H1 (cell line): ENCODE measurements at regions of chr11 and their contacts with region 1.

Region 1: GRCh38 chr11:67265633-67266423 is 445 bp upstream of the GRK2 start:
- DNase-seq: peak in 1 of 2 experiments; percentile 92
- H3K4me3 ChIP-seq: peak overlapping the region; percentile 16 to 59 (median 31); a peak in 6 of 8 replicates
- H3K27ac ChIP-seq: no peak overlapping the region
- H3K4me1 ChIP-seq: peaks cover 8 to 36% (median 34%) of the 10 kb centered on the region in 4 experiments
- H3K27me3 ChIP-seq: peaks cover 0 to 3% (median 0%) of the 10 kb centered on the region in 4 experiments; a peak in 4 of 7 replicates
- CTCF ChIP-seq: peak in 2 of 3 experiments; percentile 80 to 92; a peak in 3 of 4 replicates
- EP300 ChIP-seq: no peak
- POLR2A ChIP-seq: no peak
- RAD21 ChIP-seq: peak; percentile 61 to 77

Region 2: DNA sequence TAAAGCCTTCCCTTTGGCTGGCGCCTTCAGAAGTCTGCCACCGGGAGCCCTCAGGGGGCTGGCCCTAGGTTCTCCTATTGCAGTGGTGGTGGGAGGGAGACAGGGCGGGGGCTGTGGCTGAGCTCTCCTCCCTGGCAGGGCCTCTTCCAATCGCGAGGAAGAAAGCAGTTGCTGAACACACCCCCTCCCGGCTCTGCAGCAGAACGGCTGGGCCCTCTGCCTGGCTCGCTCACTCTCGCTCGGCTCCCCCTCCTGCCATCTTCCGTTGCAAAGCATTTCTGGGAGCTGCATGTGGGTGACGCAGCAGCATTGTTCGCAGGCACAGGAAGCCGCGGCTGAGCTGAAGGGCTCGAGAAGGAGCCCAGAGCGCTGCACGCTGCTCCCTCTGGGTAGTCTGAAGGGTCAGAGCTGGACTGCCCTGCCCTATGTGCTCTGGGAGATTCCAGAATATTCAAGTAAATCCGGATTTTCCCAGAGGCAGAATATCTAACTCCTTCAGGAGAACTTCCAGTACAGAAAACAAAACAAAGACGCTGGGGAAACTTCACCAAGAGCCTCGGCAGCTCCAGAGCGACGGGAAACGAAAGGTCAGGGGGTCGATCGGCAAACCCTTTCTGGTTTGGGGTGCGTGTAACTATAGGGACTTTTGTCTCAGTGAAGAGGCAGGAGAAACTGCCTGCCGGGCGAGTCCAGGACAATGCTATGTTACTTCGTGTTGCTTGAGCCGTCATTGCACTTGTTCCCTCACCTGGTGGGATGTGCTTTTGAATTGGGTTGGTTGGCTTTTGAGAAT is 25.8 kb before region 1 on chr11:
- CTCF ChIA-PET with region 1: interaction called, 11 read pairs
- POLR2A ChIA-PET with region 1: interaction called, 6 read pairs
- DNase-seq: peak; percentile 91 to 98
- H3K4me3 ChIP-seq: peak overlapping the region; percentile 90 to 99 (median 94)
- H3K27ac ChIP-seq: peak overlapping the region; percentile 83
- H3K4me1 ChIP-seq: peaks cover 6 to 8% (median 7%) of the 10 kb centered on the region in 4 experiments; a peak in 5 of 7 replicates
- H3K27me3 ChIP-seq: no peaks in the 10 kb centered on the region
- CTCF ChIP-seq: no peak
- EP300 ChIP-seq: peak in 1 of 2 experiments; percentile 23; a peak in 1 of 3 replicates
- POLR2A ChIP-seq: peak; percentile 95 to 99
- RAD21 ChIP-seq: peak in 1 of 2 experiments; percentile 12; a peak in 1 of 4 replicates

Region 3: GRCh38 chr11:67277231-67277961 is 11.6 kb after region 1 on chr11:
- CTCF ChIA-PET with region 1: interaction called, 28 read pairs
- POLR2A ChIA-PET with region 1: interaction called, 5 read pairs
- DNase-seq: peak in 1 of 2 experiments; percentile 82
- H3K4me3 ChIP-seq: peak overlapping the region in 1 of 4 experiments; percentile 20; a peak in 1 of 8 replicates
- H3K27ac ChIP-seq: 0 out of 2 replicates have a peak overlapping the region, but pooled peaks have one; percentile 59
- H3K4me1 ChIP-seq: peaks cover 0 to 24% (median 15%) of the 10 kb centered on the region in 4 experiments; a peak in 6 of 7 replicates
- H3K27me3 ChIP-seq: no peaks in the 10 kb centered on the region
- CTCF ChIP-seq: 0 out of 4 replicates have a peak, but pooled peaks of 1 of the 3 experiments have one; percentile 3
- EP300 ChIP-seq: no peak
- POLR2A ChIP-seq: no peak
- RAD21 ChIP-seq: no peak

Region 4: DNA sequence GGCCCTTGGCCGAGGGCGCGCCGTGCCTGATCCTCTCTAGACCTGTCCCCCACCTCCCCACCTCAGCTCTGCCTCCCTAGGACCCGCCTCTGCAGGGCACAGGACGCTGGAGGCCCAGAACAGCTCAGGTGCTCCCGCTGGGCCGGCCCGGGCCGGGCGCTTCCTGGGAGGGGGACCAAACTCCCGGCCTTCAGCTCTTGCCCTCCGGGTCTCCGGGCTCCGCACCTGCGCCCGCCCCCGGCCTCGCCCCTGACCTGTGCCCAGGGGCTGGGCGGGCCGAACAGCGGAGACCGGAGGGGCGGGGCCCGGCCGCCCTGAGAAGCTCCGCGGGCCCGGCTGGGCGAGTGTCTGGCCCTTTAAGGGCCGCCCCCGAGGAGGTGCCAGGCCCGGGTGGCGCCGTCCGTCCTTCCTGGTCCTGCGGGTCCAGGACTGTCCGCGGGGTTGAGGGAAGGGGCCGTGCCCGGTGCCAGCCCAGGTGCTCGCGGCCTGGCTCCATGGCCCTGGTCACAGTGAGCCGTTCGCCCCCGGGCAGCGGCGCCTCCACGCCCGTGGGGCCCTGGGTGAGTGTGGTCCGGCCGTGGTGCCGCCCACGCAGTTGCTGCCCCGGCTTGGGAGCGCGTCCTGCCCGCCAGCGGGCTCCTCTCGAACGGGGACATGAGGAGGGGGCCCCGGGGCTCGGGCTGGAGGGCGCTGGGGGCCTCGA is 37.5 kb after region 1 on chr11 and contains the start of gene SSH3:
- CTCF ChIA-PET with region 1: interaction called, 33 read pairs
- POLR2A ChIA-PET with region 1: interaction called, 19 read pairs
- DNase-seq: peak in 1 of 2 experiments; percentile 46
- H3K4me3 ChIP-seq: peak within 1 kb of the TSS; percentile 67 to 94 (median 74)
- H3K27ac ChIP-seq: no peak within 1 kb of the TSS
- H3K4me1 ChIP-seq: peaks cover 0 to 20% (median 16%) of the 10 kb centered on the region in 4 experiments; a peak in 5 of 7 replicates
- H3K27me3 ChIP-seq: peaks cover 0 to 11% (median 7%) of the 10 kb centered on the region in 4 experiments; a peak in 5 of 7 replicates
- CTCF ChIP-seq: no peak
- EP300 ChIP-seq: no peak
- POLR2A ChIP-seq: no peak; a peak in 1 of 3 replicates
- RAD21 ChIP-seq: no peak
- total RNA-seq, gene SSH3: 19.8 and 23.6 TPM in 2 replicates

Region 5: DNA sequence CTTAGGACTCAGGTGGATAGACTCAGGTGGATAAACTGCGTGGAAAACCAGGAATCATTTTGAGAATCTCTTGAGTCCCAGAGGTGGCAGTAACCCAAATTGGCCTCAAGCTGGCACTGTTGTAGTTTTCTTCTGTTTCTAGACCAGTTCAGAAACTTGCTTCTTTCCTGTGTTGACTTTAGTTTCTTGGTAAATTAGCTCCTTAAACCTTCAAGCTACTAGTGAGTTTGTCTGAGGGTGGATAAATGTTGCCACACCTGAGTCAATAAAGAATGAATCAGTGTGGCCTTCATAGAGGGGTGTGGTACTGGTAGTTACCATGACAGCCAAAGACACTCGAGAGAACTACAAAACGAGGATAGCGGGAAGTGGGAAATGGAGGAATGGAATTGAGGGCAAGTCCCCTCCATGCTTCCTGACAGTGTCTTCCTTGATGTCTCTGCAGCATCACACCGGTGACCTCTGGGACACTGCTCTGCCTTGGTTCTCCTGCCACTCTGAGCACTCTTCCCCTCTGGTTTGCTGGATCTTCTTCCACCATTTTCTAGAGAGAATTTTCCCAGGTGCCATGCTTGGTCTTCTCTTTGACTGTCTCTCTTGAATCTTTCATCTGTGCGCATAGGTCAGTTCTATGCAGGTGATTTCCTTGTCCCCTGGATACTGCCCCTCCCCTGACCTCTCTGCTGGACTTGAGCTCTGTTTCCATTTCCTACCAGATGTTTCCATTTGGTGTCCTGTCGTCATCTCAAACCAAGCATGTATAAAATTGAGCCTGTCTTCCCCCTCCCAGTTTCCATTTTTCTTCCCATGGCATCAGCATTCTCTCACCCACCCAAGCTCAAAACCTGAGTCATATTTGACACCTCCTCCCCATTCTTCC is 80.3 kb after region 1 on chr11:
- CTCF ChIA-PET with region 1: interaction called, 13 read pairs
- POLR2A ChIA-PET with region 1: interaction called, 3 read pairs
- DNase-seq: no peak
- H3K4me3 ChIP-seq: no peak overlapping the region
- H3K27ac ChIP-seq: no peak overlapping the region
- H3K4me1 ChIP-seq: no peaks in the 10 kb centered on the region
- H3K27me3 ChIP-seq: no peaks in the 10 kb centered on the region
- CTCF ChIP-seq: peak in 2 of 3 experiments; percentile 68 to 86; a peak in 3 of 4 replicates
- EP300 ChIP-seq: no peak
- POLR2A ChIP-seq: no peak
- RAD21 ChIP-seq: peak; percentile 55 to 63

Region 6: GRCh38 chr11:67382276-67383136 is 116.7 kb after region 1 on chr11:
- CTCF ChIA-PET with region 1: interaction called, 25 read pairs
- POLR2A ChIA-PET with region 1: no interaction called
- DNase-seq: peak in 1 of 2 experiments; percentile 94
- H3K4me3 ChIP-seq: no peak overlapping the region
- H3K27ac ChIP-seq: no peak overlapping the region
- H3K4me1 ChIP-seq: peaks cover 0 to 11% (median 5%) of the 10 kb centered on the region in 4 experiments; a peak in 5 of 7 replicates
- H3K27me3 ChIP-seq: peaks cover 0 to 16% (median 10%) of the 10 kb centered on the region in 4 experiments; a peak in 5 of 7 replicates
- CTCF ChIP-seq: peak; percentile 95 to 99 (median 98)
- EP300 ChIP-seq: no peak
- POLR2A ChIP-seq: no peak
- RAD21 ChIP-seq: peak; percentile 99 to 100